H1 (cell line): ENCODE measurements at regions of chr2 and their contacts with region 1.

Region 1: GRCh38 chr2:27249891-27250651 is 12.8 kb downstream of the SLC30A3 start:
- DNase-seq: peak; percentile 57 to 93
- H3K4me3 ChIP-seq: peak overlapping the region in 2 of 4 experiments; percentile 30 to 52; a peak in 4 of 8 replicates
- H3K27ac ChIP-seq: no peak overlapping the region
- H3K4me1 ChIP-seq: peaks cover 2 to 11% (median 6%) of the 10 kb centered on the region in 4 experiments
- H3K27me3 ChIP-seq: peaks cover 0 to 6% (median 2%) of the 10 kb centered on the region in 4 experiments; a peak in 5 of 7 replicates
- CTCF ChIP-seq: peak; percentile 86 to 98 (median 93)
- EP300 ChIP-seq: no peak
- POLR2A ChIP-seq: peak in 1 of 2 experiments; percentile 47; a peak in 1 of 3 replicates
- RAD21 ChIP-seq: peak; percentile 95 to 96

Region 2: GRCh38 chr2:27217217-27218121 is 32.6 kb before region 1 on chr2 and contains the start of gene CAD:
- CTCF ChIA-PET with region 1: interaction called, 3 read pairs
- POLR2A ChIA-PET with region 1: interaction called, 835 read pairs
- DNase-seq: peak; percentile 73 to 91
- H3K4me3 ChIP-seq: peak within 1 kb of the TSS; percentile 78 to 88 (median 82)
- H3K27ac ChIP-seq: peak within 1 kb of the TSS; percentile 95
- H3K4me1 ChIP-seq: peaks cover 0 to 9% (median 5%) of the 10 kb centered on the region in 4 experiments; a peak in 6 of 7 replicates
- H3K27me3 ChIP-seq: no peaks in the 10 kb centered on the region
- CTCF ChIP-seq: peak; percentile 2 to 28 (median 25); a peak in 3 of 4 replicates
- EP300 ChIP-seq: no peak
- POLR2A ChIP-seq: peak; percentile 71 to 89
- RAD21 ChIP-seq: no peak
- total RNA-seq, gene CAD: 146 and 147 TPM in 2 replicates

Region 3: GRCh38 chr2:27271631-27272340 is 21.7 kb after region 1 on chr2:
- CTCF ChIA-PET with region 1: interaction called, 180 read pairs
- POLR2A ChIA-PET with region 1: interaction called, 149 read pairs
- DNase-seq: no peak
- H3K4me3 ChIP-seq: no peak overlapping the region
- H3K27ac ChIP-seq: no peak overlapping the region
- H3K4me1 ChIP-seq: peaks cover 0 to 5% (median 0%) of the 10 kb centered on the region in 4 experiments; a peak in 2 of 7 replicates
- H3K27me3 ChIP-seq: peaks cover 0 to 7% (median 2%) of the 10 kb centered on the region in 4 experiments; a peak in 2 of 7 replicates
- CTCF ChIP-seq: no peak
- EP300 ChIP-seq: no peak
- POLR2A ChIP-seq: no peak
- RAD21 ChIP-seq: no peak

Region 4: DNA sequence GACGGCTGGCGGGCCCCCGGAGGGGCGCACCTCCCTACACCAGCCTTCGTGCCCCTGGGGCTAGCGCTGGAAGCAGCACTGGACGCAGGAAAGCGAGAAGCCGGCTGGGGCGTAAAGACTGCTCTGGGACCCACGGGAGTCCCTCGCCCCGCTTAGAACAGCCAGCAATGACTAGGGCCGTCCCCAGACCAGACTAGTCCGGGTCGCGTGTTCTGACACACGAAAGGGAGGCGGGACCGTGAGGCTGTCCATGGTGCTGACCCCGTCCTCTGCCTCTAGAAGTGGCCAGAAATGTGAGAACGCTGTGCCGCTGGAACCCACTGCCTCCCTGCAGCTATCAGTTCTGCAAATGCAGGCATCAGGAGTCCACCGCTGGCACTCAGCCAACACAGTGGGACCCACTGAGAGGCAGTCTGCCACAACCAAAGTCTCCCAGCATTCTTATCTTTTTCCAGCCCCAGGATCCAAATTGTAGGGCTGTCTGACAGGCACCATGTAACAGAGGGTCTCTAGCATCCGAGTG is 58.3 kb after region 1 on chr2 and contains the start of gene UCN:
- CTCF ChIA-PET with region 1: interaction called, 116 read pairs
- POLR2A ChIA-PET with region 1: interaction called, 46 read pairs
- DNase-seq: peak in 1 of 2 experiments; percentile 87
- H3K4me3 ChIP-seq: peak within 1 kb of the TSS in 3 of 4 experiments; percentile 26 to 51 (median 34); a peak in 4 of 8 replicates
- H3K27ac ChIP-seq: no peak within 1 kb of the TSS
- H3K4me1 ChIP-seq: peaks cover 0 to 26% (median 14%) of the 10 kb centered on the region in 4 experiments; a peak in 5 of 7 replicates
- H3K27me3 ChIP-seq: peaks cover 29 to 41% (median 39%) of the 10 kb centered on the region in 4 experiments
- CTCF ChIP-seq: no peak
- EP300 ChIP-seq: no peak
- POLR2A ChIP-seq: no peak
- RAD21 ChIP-seq: no peak
- total RNA-seq, gene UCN: not detected in 2 replicates